PC-3 (cell line): ENCODE measurements at regions of chr6 and their contacts with region 1.

Region 1: GRCh38 chr6:165231581-165232561 is 77.5 kb downstream of the C6orf118 start:
- DNase-seq: peak; percentile 62
- ATAC-seq: no peak; the same call in 1 of the 2 replicates
- H3K4me3 ChIP-seq: no peak overlapping the region
- H3K27ac ChIP-seq: no peak overlapping the region
- H3K4me1 ChIP-seq: peaks cover 10% of the 10 kb centered on the region
- H3K27me3 ChIP-seq: no peaks in the 10 kb centered on the region
- CTCF ChIP-seq: peak; percentile 76

Region 2: GRCh38 chr6:165191461-165191860 is 40.4 kb before region 1 on chr6:
- CTCF ChIA-PET with region 1: no interaction called
- POLR2A ChIA-PET with region 1: no interaction called
- intact Hi-C with region 1: loop called (anchors 1 kb)
- DNase-seq: no peak
- ATAC-seq: no peak
- H3K4me3 ChIP-seq: no peak overlapping the region
- H3K27ac ChIP-seq: no peak overlapping the region
- H3K4me1 ChIP-seq: no peaks in the 10 kb centered on the region
- H3K27me3 ChIP-seq: no peaks in the 10 kb centered on the region
- CTCF ChIP-seq: no peak